CD14-positive monocyte (primary cell): ENCODE measurements at regions of chr13 and their contacts with region 1.

Region 1: GRCh38 chr13:30465585-30466357 is at the start of gene HMGB1:
- DNase-seq: peak; percentile 96 to 98 (median 96)
- H3K4me3 ChIP-seq: peak within 1 kb of the TSS; percentile 59 to 88 (median 64)
- H3K4me3 Mint-ChIP-seq: peak within 1 kb of the TSS; percentile 89 to 93
- H3K27ac ChIP-seq: peak within 1 kb of the TSS; percentile 73 to 92
- H3K27ac Mint-ChIP-seq: peak within 1 kb of the TSS; percentile 94 to 98 (median 97)
- H3K4me1 ChIP-seq: peaks cover 26 to 36% of the 10 kb centered on the region in 2 donors
- H3K4me1 Mint-ChIP-seq: peaks cover 33% of the 10 kb centered on the region
- H3K27me3 ChIP-seq: no peaks in the 10 kb centered on the region
- H3K27me3 Mint-ChIP-seq: peaks cover 0 to 2% (median 2%) of the 10 kb centered on the region in 3 donors
- CTCF ChIP-seq: no peak
- polyA plus RNA-seq, gene HMGB1: 132 to 489 (median 430) TPM

Region 2: DNA sequence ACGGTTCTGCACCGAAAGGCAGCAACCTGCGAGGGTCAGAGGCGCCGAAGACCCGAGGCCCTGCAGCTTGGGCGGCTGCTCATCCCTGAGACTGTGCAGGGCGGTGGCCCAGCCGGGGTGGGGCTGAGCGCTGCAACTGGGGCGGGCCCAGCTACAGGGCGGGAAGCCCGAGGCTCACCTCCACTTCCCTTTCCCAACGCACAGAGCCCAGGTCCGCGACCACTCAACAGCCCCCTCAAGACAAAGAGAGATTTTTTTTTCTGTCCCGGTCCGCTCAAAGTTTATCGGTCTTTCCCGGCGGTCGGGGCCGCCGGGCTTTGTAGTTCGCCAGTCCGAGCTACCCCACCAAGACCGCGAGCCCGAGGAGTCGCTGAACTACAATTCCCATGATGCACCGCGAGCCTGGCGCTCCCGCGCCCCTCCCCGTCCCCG is 159.0 kb before region 1 on chr13:
- intact Hi-C with region 1: loop called in 1 of 2 experiments (anchors 10 kb)
- DNase-seq: peak; percentile 84 to 90 (median 86)
- H3K4me3 ChIP-seq: peak overlapping the region; percentile 73 to 97 (median 84)
- H3K4me3 Mint-ChIP-seq: peak overlapping the region; percentile 83 to 90
- H3K27ac ChIP-seq: peak overlapping the region in 1 of 2 donors; percentile 79
- H3K27ac Mint-ChIP-seq: peak overlapping the region in 6 of 7 donors; percentile 33 to 81 (median 68)
- H3K4me1 ChIP-seq: peaks cover 18 to 24% of the 10 kb centered on the region in 2 donors
- H3K4me1 Mint-ChIP-seq: peaks cover 36% of the 10 kb centered on the region
- H3K27me3 ChIP-seq: no peaks in the 10 kb centered on the region
- H3K27me3 Mint-ChIP-seq: peaks cover 0 to 2% (median 0%) of the 10 kb centered on the region in 3 donors
- CTCF ChIP-seq: no peak

Region 3: GRCh38 chr13:30408319-30409101 is 57.3 kb before region 1 on chr13:
- intact Hi-C with region 1: loop called (anchors 5 kb)
- DNase-seq: peak; percentile 91 to 94 (median 93)
- H3K4me3 ChIP-seq: peak overlapping the region; percentile 41 to 75 (median 53)
- H3K4me3 Mint-ChIP-seq: peak overlapping the region; percentile 81 to 92
- H3K27ac ChIP-seq: peak overlapping the region; percentile 95 to 99
- H3K27ac Mint-ChIP-seq: peak overlapping the region; percentile 97 to 100 (median 98)
- H3K4me1 ChIP-seq: peaks cover 27 to 34% of the 10 kb centered on the region in 2 donors
- H3K4me1 Mint-ChIP-seq: peaks cover 36% of the 10 kb centered on the region
- H3K27me3 ChIP-seq: no peaks in the 10 kb centered on the region
- H3K27me3 Mint-ChIP-seq: peaks cover 0 to 1% (median 0%) of the 10 kb centered on the region in 3 donors
- CTCF ChIP-seq: peak; percentile 82

Region 4: GRCh38 chr13:30617315-30618185 is 151.8 kb after region 1 on chr13 and contains the start of gene USPL1:
- intact Hi-C with region 1: loop called (anchors 2 to 5 kb)
- DNase-seq: peak; percentile 97 to 99 (median 99)
- H3K4me3 ChIP-seq: peak within 1 kb of the TSS; percentile 95 to 100 (median 98)
- H3K4me3 Mint-ChIP-seq: no peak within 1 kb of the TSS
- H3K27ac ChIP-seq: peak within 1 kb of the TSS; percentile 100
- H3K27ac Mint-ChIP-seq: no peak within 1 kb of the TSS
- H3K4me1 ChIP-seq: peaks cover 28 to 34% of the 10 kb centered on the region in 2 donors
- H3K4me1 Mint-ChIP-seq: peaks cover 5% of the 10 kb centered on the region
- H3K27me3 ChIP-seq: no peaks in the 10 kb centered on the region
- H3K27me3 Mint-ChIP-seq: no peaks in the 10 kb centered on the region
- CTCF ChIP-seq: peak; percentile 19
- polyA plus RNA-seq, gene USPL1: 3.9 to 20.5 (median 5.5) TPM

Region 5: DNA sequence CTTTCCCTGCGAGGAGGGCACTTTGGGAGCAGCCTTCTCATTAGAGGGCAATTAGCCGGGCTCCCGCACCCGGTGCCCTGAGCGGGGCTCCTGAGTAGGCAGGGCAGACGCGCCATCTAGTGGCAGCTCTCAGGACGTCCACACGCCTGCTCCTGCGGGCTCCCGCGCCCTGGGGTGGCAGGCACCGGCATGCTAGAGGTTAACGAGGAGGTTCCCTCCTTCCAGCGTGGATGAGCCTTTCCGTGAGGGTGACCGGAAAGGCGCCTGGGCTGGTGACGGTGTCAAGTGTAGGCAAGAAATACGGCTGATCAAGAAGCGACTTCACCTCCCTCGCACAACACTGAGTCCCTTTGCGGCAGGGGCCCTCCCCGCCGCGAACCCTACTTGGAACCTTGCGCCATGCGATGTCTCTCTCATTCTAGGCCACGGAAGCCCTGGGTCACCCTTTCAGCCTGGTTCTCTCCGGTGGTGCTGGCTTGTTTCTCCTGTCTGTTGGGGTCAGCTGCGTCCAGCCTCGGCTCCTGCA is 337.2 kb after region 1 on chr13:
- intact Hi-C with region 1: loop called in 1 of 2 experiments (anchors 2 kb)
- DNase-seq: peak; percentile 85 to 88 (median 87)
- H3K4me3 ChIP-seq: peak overlapping the region in 1 of 3 experiments; percentile 60
- H3K4me3 Mint-ChIP-seq: peak overlapping the region; percentile 70 to 87
- H3K27ac ChIP-seq: no peak overlapping the region
- H3K27ac Mint-ChIP-seq: peak overlapping the region in 6 of 7 donors; percentile 8 to 81 (median 62)
- H3K4me1 ChIP-seq: peaks cover 26 to 29% of the 10 kb centered on the region in 2 donors
- H3K4me1 Mint-ChIP-seq: peaks cover 32% of the 10 kb centered on the region
- H3K27me3 ChIP-seq: no peaks in the 10 kb centered on the region
- H3K27me3 Mint-ChIP-seq: peaks cover 3 to 11% (median 3%) of the 10 kb centered on the region in 3 donors
- CTCF ChIP-seq: peak; percentile 98